BJ (cell line): ENCODE measurements at regions of chr14 and their contacts with region 1.

Region 1: GRCh38 chr14:22994762-22995275 is 12.5 kb upstream of the AJUBA start:
- DNase-seq: no peak
- H3K4me3 ChIP-seq: no peak overlapping the region
- H3K27me3 ChIP-seq: no peaks in the 10 kb centered on the region
- CTCF ChIP-seq: peak; percentile 72

Region 2: GRCh38 chr14:22556990-22557623 is 437.7 kb before region 1 on chr14:
- CTCF ChIA-PET with region 1: no interaction called
- POLR2A ChIA-PET with region 1: no interaction called
- DNase-seq: no peak
- H3K4me3 ChIP-seq: peak overlapping the region; percentile 22
- H3K27me3 ChIP-seq: no peaks in the 10 kb centered on the region
- CTCF ChIP-seq: peak; percentile 96

Region 3: GRCh38 chr14:22918804-22919600 is 75.8 kb before region 1 on chr14 and contains the start of gene RBM23:
- CTCF ChIA-PET with region 1: no interaction called
- POLR2A ChIA-PET with region 1: interaction called, 14 read pairs
- DNase-seq: peak; percentile 100
- H3K4me3 ChIP-seq: peak within 1 kb of the TSS; percentile 74
- H3K27me3 ChIP-seq: no peaks in the 10 kb centered on the region
- CTCF ChIP-seq: no peak
- polyA plus RNA-seq, gene RBM23: 54.1 and 60.9 TPM in 2 replicates

Region 4: DNA sequence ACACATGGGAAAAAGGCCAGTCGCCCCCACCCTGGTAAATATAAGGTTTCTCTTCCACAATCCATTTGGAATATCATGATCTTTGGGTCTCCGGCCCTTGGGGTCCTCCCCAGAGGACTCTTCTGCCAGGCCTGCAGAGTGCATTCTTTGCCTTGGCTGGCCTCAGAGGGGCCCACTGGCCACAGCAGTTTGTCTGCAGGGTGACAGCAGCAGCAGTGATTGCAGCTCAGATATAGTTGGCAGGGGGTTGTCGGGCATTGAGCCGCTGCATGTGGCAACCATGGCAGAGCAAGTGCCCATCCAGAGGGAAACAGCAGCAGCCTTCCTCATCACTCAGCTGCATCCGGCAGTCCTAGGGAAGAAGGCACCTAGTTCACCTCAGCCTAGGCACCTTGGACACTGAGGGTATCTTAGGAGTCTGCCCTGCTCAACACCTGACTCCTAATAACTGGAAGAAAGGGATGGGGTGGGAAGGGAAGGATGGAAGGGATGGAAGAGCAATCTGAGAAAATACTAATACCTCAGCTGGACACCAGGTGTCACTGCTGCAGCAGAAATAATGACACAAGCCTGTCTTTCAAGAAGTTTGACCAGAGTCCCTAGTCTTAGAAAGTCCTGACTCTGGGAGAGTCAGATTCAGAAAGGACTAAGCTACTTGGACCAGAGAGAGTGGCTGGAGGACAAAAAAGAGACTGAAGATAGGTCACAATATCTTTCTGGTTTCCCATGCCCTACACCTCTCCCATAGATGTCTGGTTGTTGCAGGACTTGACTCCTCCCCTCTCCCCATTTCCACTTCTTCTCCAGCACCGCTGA is 21.4 kb before region 1 on chr14:
- CTCF ChIA-PET with region 1: interaction called, 10 read pairs
- POLR2A ChIA-PET with region 1: no interaction called
- DNase-seq: no peak
- H3K4me3 ChIP-seq: no peak overlapping the region
- H3K27me3 ChIP-seq: no peaks in the 10 kb centered on the region
- CTCF ChIP-seq: peak; percentile 65

Region 5: DNA sequence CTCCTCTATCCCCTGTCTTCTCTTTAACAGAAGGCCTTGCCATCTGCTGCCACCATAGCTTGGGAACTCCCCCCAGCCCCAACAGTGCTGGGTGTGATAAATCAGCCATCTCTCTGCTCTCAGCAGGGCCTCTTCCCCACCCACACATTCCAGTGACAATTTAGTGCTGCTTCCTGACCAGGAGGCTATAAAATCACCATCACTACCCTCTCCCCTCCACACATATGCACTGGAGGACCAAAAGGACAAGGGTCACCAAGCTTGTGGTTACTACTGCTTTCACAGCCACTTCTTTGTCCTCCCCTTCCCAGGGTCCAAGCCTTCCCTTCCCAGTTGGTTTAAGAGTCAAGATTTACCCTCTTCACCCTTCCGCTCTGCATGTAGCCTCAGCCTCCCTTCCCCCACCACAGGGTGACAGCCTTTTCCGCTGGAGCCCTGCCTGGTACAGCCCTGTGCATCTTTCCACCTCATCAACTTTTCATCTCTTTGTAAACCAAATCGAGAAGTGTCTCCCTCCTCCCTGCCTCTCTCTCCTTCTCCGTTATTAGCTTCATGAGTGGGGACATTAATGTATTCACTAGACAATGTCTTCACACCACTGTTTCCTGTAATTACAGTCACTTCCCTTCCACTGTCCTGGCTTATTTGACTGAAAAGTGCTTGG is 30.5 kb after region 1 on chr14:
- CTCF ChIA-PET with region 1: interaction called, 19 read pairs
- POLR2A ChIA-PET with region 1: no interaction called
- DNase-seq: no peak
- H3K4me3 ChIP-seq: no peak overlapping the region
- H3K27me3 ChIP-seq: no peaks in the 10 kb centered on the region
- CTCF ChIP-seq: no peak

Region 6: GRCh38 chr14:23114669-23115491 is 120.1 kb after region 1 on chr14:
- CTCF ChIA-PET with region 1: interaction called, 31 read pairs
- POLR2A ChIA-PET with region 1: interaction called, 3 read pairs
- DNase-seq: peak; percentile 92
- H3K4me3 ChIP-seq: no peak overlapping the region
- H3K27me3 ChIP-seq: peaks cover under 1% of the 10 kb centered on the region; the same call in 1 of the 2 replicates
- CTCF ChIP-seq: no peak